ENCODE measurements at regions of chr21 and their contacts with region 1.

Region 1: GRCh38 chr21:32826329-32827167 is 55.0 kb upstream of the PAXBP1 start:
- DNase-seq: peak; percentile 45
- H3K4me3 ChIP-seq: no peak overlapping the region
- H3K27ac ChIP-seq: no peak overlapping the region
- H3K4me1 ChIP-seq: no peaks in the 10 kb centered on the region
- CTCF ChIP-seq: peak; percentile 68

Region 2: DNA sequence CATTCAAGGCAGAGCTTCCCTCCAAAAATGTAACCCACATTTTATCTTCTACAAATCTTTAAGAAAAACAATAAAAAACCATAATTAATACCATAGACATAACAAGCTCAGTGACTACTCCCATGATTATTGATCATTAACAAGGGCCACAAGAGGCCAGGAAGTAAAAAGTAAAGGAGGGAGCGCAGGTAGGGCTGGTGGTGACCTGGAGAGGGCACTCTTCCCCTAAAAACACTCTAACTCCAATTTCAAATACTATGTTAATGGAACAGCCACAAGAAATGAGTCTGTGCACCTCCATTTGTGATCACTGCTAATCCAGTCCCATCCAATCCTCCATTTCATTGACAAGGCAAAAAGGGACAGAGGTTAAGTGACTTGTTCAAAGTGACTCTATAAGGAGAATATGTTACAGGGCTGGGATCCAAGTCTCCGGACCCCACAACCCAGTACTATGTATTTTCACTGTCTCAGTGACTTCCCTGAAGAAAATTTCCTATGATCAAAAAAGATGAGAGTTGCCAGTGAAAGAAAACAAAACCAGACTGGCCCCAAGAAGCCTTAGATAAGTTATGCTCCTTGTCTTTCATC is 173.1 kb before region 1 on chr21:
- CTCF ChIA-PET with region 1: no interaction called
- POLR2A ChIA-PET with region 1: no interaction called
- intact Hi-C with region 1: loop called (anchors 1 kb)
- DNase-seq: peak; percentile 37
- H3K4me3 ChIP-seq: no peak overlapping the region
- H3K27ac ChIP-seq: no peak overlapping the region
- H3K4me1 ChIP-seq: peaks cover 5% of the 10 kb centered on the region
- CTCF ChIP-seq: peak; percentile 91

Region 3: GRCh38 chr21:33114276-33114675 is 287.7 kb after region 1 on chr21:
- CTCF ChIA-PET with region 1: no interaction called
- POLR2A ChIA-PET with region 1: no interaction called
- intact Hi-C with region 1: no loop called
- DNase-seq: no peak
- H3K4me3 ChIP-seq: no peak overlapping the region
- H3K27ac ChIP-seq: no peak overlapping the region
- H3K4me1 ChIP-seq: no peaks in the 10 kb centered on the region
- CTCF ChIP-seq: no peak